OCI-LY7 (cell line): ENCODE measurements at regions of chr10 and their contacts with region 1.

Region 1: DNA sequence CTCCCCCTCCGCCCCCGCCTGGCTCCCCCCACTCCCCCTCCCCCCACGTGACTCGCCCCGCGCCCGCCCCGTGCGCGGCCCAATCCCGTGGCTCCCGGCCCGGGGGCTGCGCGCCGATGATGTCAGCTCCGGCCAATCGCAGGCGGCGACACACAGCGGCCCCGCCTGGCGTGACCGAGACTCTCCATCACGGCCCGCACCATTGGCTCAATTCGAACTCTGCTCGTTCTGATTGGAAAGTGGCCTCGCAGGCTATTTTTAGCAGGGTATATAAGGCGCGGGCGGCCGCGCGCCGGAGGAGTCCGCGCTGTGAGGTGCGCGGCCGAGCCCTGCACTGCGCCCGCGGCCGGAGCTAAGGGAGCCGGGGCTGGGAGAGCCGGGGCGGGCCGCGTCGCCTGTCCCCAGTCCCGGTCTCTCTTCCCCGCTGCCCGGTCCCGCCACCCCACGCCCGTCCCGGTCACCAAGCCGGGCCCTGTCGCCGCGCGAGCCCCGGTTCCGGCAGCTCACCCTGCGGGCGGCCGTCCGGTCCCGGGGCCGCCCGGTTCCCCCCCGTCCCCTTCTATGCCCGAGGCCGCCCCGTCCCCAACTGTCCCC is 345 bp upstream of the KLF6 start:
- DNase-seq: peak; percentile 99
- H3K4me3 ChIP-seq: peak overlapping the region; percentile 94
- H3K27ac ChIP-seq: peak overlapping the region; percentile 81
- H3K4me1 ChIP-seq: peaks cover 26% of the 10 kb centered on the region
- CTCF ChIP-seq: no peak

Region 2: GRCh38 chr10:3668276-3668965 is 116.9 kb before region 1 on chr10:
- CTCF ChIA-PET with region 1: no interaction called
- POLR2A ChIA-PET with region 1: no interaction called
- intact Hi-C with region 1: no loop called
- DNase-seq: peak; percentile 59
- H3K4me3 ChIP-seq: peak overlapping the region; percentile 29
- H3K27ac ChIP-seq: no peak overlapping the region
- H3K4me1 ChIP-seq: peaks cover 22% of the 10 kb centered on the region
- CTCF ChIP-seq: no peak

Region 3: DNA sequence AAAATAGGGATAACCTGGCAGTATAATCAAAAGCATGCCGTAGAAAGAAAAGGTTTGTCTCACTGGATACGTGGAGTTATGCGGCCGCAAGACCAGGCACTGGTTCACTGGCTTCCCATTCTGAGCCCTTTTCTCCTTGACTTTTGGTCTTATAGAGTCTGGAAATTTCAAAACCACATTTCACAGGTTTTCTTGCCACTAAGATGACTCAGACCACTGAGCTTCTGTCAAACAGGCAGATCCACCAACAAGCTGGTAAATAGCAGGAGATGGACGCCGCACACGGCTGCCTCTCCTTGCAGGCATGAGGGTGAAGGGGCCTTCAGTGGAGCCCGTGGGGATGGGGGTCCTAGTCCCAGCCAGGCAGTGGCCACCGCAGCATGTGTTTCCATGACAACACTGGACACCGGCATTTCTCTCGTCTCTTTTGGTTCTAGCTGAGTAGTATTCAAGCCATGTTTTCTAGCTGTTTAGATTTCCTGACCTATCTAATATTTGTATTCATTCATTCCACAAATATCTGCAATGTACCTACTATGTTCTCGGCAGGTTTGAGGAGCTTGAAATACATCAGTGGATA is 55.9 kb before region 1 on chr10:
- CTCF ChIA-PET with region 1: no interaction called
- POLR2A ChIA-PET with region 1: no interaction called
- intact Hi-C with region 1: no loop called
- DNase-seq: no peak
- H3K4me3 ChIP-seq: no peak overlapping the region
- H3K27ac ChIP-seq: no peak overlapping the region
- H3K4me1 ChIP-seq: no peaks in the 10 kb centered on the region
- CTCF ChIP-seq: no peak

Region 4: GRCh38 chr10:3805791-3806461 is 20.6 kb after region 1 on chr10:
- CTCF ChIA-PET with region 1: no interaction called
- POLR2A ChIA-PET with region 1: interaction called, 24 read pairs
- intact Hi-C with region 1: loop called (anchors 1 kb)
- DNase-seq: peak; percentile 93
- H3K4me3 ChIP-seq: peak overlapping the region; percentile 61
- H3K27ac ChIP-seq: peak overlapping the region; percentile 98
- H3K4me1 ChIP-seq: peaks cover 83% of the 10 kb centered on the region
- CTCF ChIP-seq: no peak

Region 5: DNA sequence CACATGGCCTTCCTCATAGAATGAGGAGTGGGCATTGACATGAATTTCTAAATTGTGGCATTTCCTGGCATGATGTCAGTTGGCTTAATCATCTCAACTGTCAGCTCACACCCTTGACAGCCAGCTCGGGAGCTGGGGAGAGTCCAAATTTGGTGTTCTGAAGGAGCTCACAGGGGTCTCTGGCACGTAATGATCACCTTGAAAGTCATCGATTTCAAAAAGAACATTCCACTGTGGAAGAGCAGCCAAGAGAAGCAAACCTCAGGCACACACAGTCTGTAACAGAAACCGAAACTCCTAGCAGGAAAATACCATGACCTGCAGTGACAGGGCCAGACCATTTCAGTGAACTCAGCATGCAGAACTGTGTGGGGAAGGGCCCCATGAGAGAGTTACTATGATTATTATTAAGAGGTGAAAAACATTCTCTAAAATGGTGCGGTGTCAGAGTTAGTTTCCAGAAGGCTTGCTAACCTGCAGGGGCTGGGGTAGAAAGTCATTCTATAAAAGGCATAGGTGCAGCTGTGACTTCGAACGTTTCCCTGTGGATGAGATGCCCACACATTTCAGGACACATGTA is 26.0 kb after region 1 on chr10:
- CTCF ChIA-PET with region 1: no interaction called
- POLR2A ChIA-PET with region 1: interaction called, 24 read pairs
- intact Hi-C with region 1: loop called (anchors 1 kb)
- DNase-seq: peak; percentile 66
- H3K4me3 ChIP-seq: peak overlapping the region; percentile 54
- H3K27ac ChIP-seq: peak overlapping the region; percentile 58
- H3K4me1 ChIP-seq: peaks cover 60% of the 10 kb centered on the region
- CTCF ChIP-seq: no peak

Region 6: DNA sequence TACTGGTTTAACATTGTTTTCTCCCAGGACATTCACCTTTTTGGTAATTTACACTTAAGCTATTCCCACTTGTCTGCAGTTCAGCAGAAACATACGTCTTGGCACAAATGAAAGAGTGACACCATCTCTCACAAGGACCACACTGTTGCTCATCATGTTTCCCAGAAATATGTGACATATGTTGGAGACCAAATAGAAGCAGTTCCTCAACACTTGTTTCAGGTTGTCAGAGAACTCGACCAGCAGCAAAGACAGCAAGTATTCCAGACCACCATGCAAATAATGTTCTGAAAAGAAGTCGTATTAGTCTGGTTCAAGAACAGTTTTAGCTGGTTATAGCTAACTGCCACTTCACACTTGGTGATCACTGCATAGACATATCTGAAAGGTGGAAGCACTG is 81.0 kb after region 1 on chr10:
- CTCF ChIA-PET with region 1: no interaction called
- POLR2A ChIA-PET with region 1: interaction called, 10 read pairs
- intact Hi-C with region 1: loop called (anchors 2 kb)
- DNase-seq: peak; percentile 23
- H3K4me3 ChIP-seq: peak overlapping the region; percentile 5
- H3K27ac ChIP-seq: peak overlapping the region; percentile 33
- H3K4me1 ChIP-seq: peaks cover 46% of the 10 kb centered on the region
- CTCF ChIP-seq: no peak

Region 7: GRCh38 chr10:3873728-3874461 is 88.5 kb after region 1 on chr10:
- CTCF ChIA-PET with region 1: no interaction called
- POLR2A ChIA-PET with region 1: interaction called, 10 read pairs
- intact Hi-C with region 1: loop called (anchors 2 kb)
- DNase-seq: peak; percentile 89
- H3K4me3 ChIP-seq: peak overlapping the region; percentile 14
- H3K27ac ChIP-seq: no peak overlapping the region
- H3K4me1 ChIP-seq: peaks cover 50% of the 10 kb centered on the region
- CTCF ChIP-seq: no peak

Region 8: DNA sequence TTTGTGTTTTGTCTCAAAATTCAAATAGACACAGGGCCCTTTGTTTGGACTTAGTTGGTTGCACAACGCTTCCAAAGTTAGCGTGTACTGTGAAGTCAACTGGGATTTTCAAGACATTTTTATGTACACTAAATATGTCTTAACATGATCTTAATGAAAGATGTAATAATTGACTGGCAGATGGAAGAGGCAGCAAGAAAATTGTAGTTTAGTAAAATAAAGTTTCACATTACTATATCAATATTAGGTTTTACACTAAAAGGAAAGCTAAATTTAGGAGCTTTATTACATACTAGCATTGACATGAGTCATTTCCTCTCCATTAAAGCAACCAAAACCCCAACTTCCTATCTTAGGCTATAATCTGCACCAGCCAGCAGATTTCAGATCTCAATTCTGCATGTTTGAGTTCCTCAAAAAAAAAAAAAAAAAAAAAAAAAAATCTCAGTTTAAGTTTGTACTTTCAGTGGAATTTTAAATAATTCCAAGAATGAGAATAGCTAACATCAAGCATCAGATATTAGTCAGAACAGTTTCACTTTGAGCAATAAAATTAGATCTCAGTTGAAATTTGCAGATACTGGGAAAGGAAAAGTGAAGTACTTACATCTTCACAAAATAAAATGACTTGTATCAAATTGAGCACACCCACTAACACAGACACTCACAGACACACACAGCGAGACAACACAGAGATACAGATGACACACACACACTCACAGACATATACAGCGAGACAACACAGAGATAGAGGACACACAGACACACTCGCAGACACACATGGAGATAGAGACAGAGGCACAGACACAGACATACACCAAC is 346.3 kb after region 1 on chr10:
- CTCF ChIA-PET with region 1: no interaction called
- POLR2A ChIA-PET with region 1: interaction called, 3 read pairs
- intact Hi-C with region 1: loop called (anchors 10 kb)
- DNase-seq: peak; percentile 63
- H3K4me3 ChIP-seq: peak overlapping the region; percentile 21
- H3K27ac ChIP-seq: no peak overlapping the region
- H3K4me1 ChIP-seq: peaks cover 49% of the 10 kb centered on the region
- CTCF ChIP-seq: no peak